CD8-positive, alpha-beta T cell (primary cell): ENCODE measurements at regions of chr7 and their contacts with region 1.

Region 1: DNA sequence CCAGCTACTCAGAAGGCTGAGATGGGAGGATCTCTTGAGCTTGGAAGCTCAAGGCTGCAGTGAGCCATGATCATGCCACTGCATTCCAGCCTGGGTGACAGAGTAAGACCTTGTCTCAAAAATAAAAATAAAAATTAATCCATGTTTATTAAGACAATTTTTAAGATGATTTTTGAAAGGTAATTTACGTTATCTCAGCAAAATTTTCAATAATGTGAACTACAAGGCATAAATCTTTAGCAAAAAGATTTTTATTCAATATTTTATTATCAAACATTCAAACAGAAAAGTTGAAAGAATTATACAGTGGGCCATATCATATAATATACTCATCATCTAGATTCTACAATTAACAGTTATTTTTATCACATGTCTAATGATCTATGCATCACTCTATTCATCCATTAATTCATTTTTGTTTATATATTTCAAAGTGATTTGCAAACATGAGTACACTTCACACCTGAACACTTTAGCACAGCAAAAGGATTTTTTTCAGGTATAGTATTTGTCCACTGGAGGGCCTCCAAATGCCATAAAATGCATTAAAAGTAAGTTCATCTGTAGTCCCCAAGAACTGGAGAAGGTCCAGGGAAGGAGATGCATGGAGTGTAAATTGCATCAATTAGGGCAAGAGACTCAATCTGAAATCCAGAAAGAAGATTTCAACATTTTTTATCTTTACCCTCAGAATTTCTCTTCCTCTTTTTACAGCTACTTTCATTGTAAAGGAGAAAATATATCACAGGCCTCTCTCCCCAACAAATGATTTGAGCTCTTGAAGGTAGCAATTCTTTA is 38.6 kb upstream of the RSBN1L start:
- DNase-seq: peak in 2 of 9 experiments; percentile 52 to 64
- ATAC-seq: peak; percentile 59
- H3K4me3 ChIP-seq: no peak overlapping the region
- H3K4me3 Mint-ChIP-seq: no peak overlapping the region
- H3K27ac ChIP-seq: no peak overlapping the region
- H3K27ac Mint-ChIP-seq: no peak overlapping the region
- H3K4me1 ChIP-seq: no peaks in the 10 kb centered on the region
- H3K4me1 Mint-ChIP-seq: no peaks in the 10 kb centered on the region
- H3K27me3 ChIP-seq: no peaks in the 10 kb centered on the region
- H3K27me3 Mint-ChIP-seq: no peaks in the 10 kb centered on the region
- CTCF ChIP-seq: peak; percentile 83

Region 2: DNA sequence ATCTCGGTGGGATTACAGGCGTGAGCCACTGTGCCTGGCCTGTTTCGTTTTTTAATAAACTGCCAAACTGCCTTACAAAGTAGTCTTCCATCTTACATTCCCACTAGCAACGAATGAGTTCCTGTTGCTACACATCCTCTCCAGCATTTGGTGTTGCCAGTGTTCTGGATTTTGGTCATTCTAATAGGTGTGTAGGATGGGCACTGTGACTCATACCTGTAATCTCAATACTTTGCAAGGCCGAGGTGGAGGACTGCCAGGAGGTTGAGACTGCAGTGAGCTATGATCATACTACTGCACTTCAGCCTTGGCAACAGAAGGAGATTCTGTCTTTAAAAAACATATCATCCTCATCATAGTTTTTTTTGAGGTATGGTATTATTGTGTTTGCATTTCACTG is 17.3 kb after region 1 on chr7:
- CTCF ChIA-PET with region 1: interaction called, 11 read pairs
- POLR2A ChIA-PET with region 1: no interaction called
- intact Hi-C with region 1: no loop called
- DNase-seq: no peak
- ATAC-seq: no peak
- H3K4me3 ChIP-seq: no peak overlapping the region
- H3K4me3 Mint-ChIP-seq: no peak overlapping the region
- H3K27ac ChIP-seq: no peak overlapping the region
- H3K27ac Mint-ChIP-seq: no peak overlapping the region
- H3K4me1 ChIP-seq: no peaks in the 10 kb centered on the region
- H3K4me1 Mint-ChIP-seq: no peaks in the 10 kb centered on the region
- H3K27me3 ChIP-seq: no peaks in the 10 kb centered on the region
- H3K27me3 Mint-ChIP-seq: no peaks in the 10 kb centered on the region
- CTCF ChIP-seq: no peak

Region 3: GRCh38 chr7:77696198-77697028 is 38.8 kb after region 1 on chr7 and contains the start of gene RSBN1L:
- CTCF ChIA-PET with region 1: interaction called, 7 read pairs
- POLR2A ChIA-PET with region 1: no interaction called
- intact Hi-C with region 1: loop called in 1 of 2 experiments (anchors 5 kb)
- DNase-seq: peak; percentile 96 to 99 (median 98)
- ATAC-seq: peak; percentile 93
- H3K4me3 ChIP-seq: peak within 1 kb of the TSS; percentile 98 to 99
- H3K4me3 Mint-ChIP-seq: peak within 1 kb of the TSS; percentile 99
- H3K27ac ChIP-seq: peak within 1 kb of the TSS; percentile 93 to 94
- H3K27ac Mint-ChIP-seq: peak within 1 kb of the TSS; percentile 98
- H3K4me1 ChIP-seq: peaks cover 27% of the 10 kb centered on the region
- H3K4me1 Mint-ChIP-seq: peaks cover 68% of the 10 kb centered on the region
- H3K27me3 ChIP-seq: no peaks in the 10 kb centered on the region
- H3K27me3 Mint-ChIP-seq: no peaks in the 10 kb centered on the region
- CTCF ChIP-seq: peak; percentile 34
- total RNA-seq, gene RSBN1L: 7.4 to 10.0 TPM

Region 4: DNA sequence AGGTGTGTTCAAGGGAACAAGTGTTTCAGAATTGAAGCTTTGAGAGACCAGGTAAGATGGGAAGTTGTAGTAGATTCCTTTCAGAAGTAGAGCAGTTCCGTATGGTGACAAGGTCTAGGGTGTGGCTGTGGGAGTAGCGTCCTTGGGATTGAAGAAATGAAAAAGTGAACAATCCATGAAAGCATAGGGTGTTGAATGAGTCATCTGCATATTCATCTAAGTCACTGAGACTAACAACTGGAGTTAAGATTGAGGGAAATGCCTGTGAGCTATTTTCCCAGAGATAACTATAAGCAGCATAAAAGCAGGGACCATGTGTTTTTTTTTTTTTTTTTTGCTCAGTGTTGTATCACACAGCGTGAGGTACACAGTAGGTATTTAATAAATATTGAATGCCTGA is 275.8 kb after region 1 on chr7:
- CTCF ChIA-PET with region 1: interaction called, 4 read pairs
- POLR2A ChIA-PET with region 1: no interaction called
- intact Hi-C with region 1: loop called (anchors 5 kb)
- DNase-seq: no peak
- ATAC-seq: no peak
- H3K4me3 ChIP-seq: no peak overlapping the region
- H3K4me3 Mint-ChIP-seq: no peak overlapping the region
- H3K27ac ChIP-seq: no peak overlapping the region
- H3K27ac Mint-ChIP-seq: no peak overlapping the region
- H3K4me1 ChIP-seq: no peaks in the 10 kb centered on the region
- H3K4me1 Mint-ChIP-seq: peaks cover 7% of the 10 kb centered on the region
- H3K27me3 ChIP-seq: no peaks in the 10 kb centered on the region
- H3K27me3 Mint-ChIP-seq: no peaks in the 10 kb centered on the region
- CTCF ChIP-seq: no peak

Region 5: GRCh38 chr7:77940647-77941046 is 283.0 kb after region 1 on chr7:
- CTCF ChIA-PET with region 1: interaction called, 4 read pairs
- POLR2A ChIA-PET with region 1: no interaction called
- intact Hi-C with region 1: loop called in 1 of 2 experiments (anchors 5 kb)
- DNase-seq: peak in 2 of 9 experiments; percentile 6 to 8
- ATAC-seq: no peak
- H3K4me3 ChIP-seq: no peak overlapping the region
- H3K4me3 Mint-ChIP-seq: no peak overlapping the region
- H3K27ac ChIP-seq: no peak overlapping the region
- H3K27ac Mint-ChIP-seq: no peak overlapping the region
- H3K4me1 ChIP-seq: no peaks in the 10 kb centered on the region
- H3K4me1 Mint-ChIP-seq: peaks cover 2% of the 10 kb centered on the region
- H3K27me3 ChIP-seq: no peaks in the 10 kb centered on the region
- H3K27me3 Mint-ChIP-seq: no peaks in the 10 kb centered on the region
- CTCF ChIP-seq: no peak

Region 6: DNA sequence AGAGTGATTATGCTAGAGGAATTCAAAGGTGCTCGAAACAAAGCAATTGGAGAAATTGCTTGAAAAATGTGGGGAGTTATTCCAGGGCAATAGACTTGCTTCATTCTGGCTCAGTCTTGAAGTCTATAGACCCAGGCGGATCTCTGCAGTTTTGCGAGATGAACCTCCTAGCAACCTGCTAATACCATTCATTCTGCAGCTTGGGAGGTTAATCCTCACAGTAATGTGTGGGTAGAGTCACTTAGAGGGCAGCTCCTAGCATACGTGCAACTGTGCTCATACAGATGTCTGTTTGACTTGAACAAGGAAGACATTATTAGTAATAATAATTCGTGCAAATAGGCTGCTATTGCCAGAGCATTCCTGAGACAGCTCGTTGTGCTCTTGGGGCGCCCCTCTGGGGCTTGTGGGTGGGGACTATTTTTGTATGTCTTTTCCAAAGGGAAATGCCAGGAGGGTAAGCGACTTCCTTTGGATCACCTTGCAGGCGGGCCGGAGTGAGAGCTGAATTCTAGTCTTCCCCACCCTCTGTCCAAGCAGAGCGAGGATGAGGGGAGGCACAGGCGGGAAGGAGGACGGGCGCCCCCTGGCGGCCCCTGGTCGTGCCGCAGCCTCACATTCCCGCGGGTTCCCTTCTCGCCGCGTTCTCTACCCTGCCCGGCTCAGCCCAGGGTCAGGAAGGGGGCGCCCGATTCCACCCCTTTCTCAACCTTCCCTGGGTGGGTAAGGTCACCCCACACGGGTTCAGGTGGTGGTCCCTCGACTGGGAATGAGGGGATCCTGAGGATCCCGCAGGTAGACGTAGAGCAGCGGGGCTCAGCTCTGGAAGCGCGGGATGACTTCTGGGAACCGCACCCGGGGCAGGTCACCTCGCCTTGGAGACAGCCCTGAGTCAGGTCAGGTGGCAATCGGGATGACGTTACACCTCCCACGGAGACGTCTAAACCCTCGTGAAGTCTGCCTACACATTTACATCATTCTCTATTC is 382.5 kb after region 1 on chr7:
- CTCF ChIA-PET with region 1: interaction called, 21 read pairs
- POLR2A ChIA-PET with region 1: no interaction called
- intact Hi-C with region 1: loop called (anchors 2 kb)
- DNase-seq: peak; percentile 4 to 72 (median 28)
- ATAC-seq: peak; percentile 58
- H3K4me3 ChIP-seq: no peak overlapping the region
- H3K4me3 Mint-ChIP-seq: no peak overlapping the region
- H3K27ac ChIP-seq: no peak overlapping the region
- H3K27ac Mint-ChIP-seq: no peak overlapping the region
- H3K4me1 ChIP-seq: peaks cover 3% of the 10 kb centered on the region
- H3K4me1 Mint-ChIP-seq: peaks cover 2% of the 10 kb centered on the region
- H3K27me3 ChIP-seq: no peaks in the 10 kb centered on the region
- H3K27me3 Mint-ChIP-seq: peaks cover 27% of the 10 kb centered on the region
- CTCF ChIP-seq: peak; percentile 79